ENCODE measurements at regions of chr17 and their contacts with region 1.

Region 1: GRCh38 chr17:48084932-48085444 is 16.3 kb downstream of the CBX1 start:
- DNase-seq: no peak
- H3K4me3 ChIP-seq: no peak overlapping the region
- CTCF ChIP-seq: no peak

Region 2: DNA sequence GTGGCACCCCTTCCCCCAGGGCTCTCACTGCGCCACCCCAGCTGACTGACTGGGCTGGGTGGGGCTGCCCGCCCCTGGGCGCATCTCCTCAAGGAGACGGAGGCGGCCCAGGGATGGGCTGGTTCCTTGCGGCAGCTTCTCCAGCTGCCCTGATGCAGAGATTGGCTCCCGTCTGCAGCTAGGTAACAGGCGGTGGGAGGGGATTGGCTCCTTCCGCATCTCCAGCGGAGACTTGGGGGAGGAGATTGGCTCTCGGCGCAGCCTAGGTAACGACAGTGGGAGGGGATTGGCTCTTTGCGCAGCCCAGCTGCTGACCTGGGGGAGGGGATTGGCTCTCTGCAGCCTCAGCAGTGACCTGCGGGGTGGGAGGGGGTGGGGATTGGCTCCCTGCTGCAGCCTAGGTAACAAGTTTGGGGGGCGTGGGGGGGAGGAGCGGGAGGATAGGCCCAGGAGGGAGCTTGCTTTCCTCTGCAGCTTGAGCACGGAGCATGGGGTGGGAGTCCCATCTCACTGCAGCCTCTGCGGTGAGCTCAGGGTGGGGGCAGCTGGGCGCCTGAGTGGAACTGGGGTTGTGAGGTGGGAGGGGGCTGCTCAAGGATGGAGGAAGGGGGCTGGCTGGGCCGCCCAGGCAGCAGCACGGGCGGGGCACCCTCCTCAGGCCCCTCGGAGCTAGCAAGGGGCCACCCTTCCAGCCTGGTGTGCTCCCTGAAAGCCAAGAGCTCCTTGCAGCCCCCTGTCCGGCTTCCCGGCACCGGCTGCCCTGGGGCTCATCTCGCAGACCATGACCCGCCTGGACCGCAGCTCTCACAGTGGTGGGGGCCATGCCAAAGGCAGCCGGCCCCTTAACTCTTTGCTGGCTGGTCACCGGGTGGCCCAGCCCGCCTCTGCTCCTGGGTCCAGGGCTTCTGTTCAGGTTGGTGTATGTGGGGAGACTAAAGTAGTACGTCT is 30.5 kb before region 1 on chr17:
- CTCF ChIA-PET with region 1: interaction called, 25 read pairs
- POLR2A ChIA-PET with region 1: no interaction called
- DNase-seq: no peak
- H3K4me3 ChIP-seq: peak overlapping the region; percentile 15
- CTCF ChIP-seq: no peak

Region 3: DNA sequence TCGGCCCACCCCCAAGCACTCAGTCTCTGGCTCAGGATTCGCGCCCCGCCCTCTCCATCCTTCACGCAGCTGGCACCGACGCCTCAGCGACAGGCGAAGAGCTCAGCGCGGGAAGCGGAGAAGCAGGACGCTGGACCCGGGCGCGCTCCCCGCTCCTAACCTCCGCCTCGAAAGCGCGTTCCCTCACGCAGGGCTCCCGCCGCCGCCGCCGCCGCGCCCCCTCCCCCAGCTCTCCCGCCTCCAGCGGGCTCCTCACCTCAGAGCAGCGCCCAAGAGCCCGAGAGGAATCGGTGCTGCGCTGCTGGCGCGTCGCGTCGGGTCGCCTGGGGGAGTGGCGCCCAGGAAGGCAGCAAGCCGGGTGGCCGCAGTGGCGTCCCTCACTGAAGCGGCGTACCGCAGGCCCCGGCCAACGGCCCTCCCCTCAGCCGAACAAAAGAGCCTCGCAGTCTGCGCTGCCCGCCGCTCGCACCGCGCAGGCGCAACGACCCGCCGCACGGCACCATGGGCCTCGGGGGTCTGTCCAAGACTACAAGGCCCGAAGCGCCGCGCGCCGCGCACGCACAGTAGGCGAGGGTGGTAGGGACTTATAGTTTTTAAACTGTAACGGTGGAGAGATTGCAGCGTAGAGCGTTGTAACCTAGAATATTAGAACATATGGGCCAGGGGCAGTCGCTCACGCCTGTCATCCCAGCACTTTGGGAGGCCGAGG is 16.2 kb after region 1 on chr17 and contains the start of gene CBX1:
- CTCF ChIA-PET with region 1: interaction called, 56 read pairs
- POLR2A ChIA-PET with region 1: no interaction called
- DNase-seq: peak; percentile 46
- H3K4me3 ChIP-seq: peak within 1 kb of the TSS; percentile 88
- CTCF ChIP-seq: no peak